ENCODE measurements at regions of chr15 and their contacts with region 1.

Region 1: GRCh38 chr15:64046347-64047153 is at the start of gene DAPK2:
- H3K4me3 ChIP-seq: peak within 1 kb of the TSS; percentile 36
- H3K27ac ChIP-seq: no peak within 1 kb of the TSS; the same call in 1 of the 2 replicates
- H3K4me1 ChIP-seq: 0 out of 2 replicates have a peak, but pooled peaks cover 3% of the 10 kb centered on the region
- CTCF ChIP-seq: peak; percentile 31; the same call in 1 of the 2 replicates

Region 2: DNA sequence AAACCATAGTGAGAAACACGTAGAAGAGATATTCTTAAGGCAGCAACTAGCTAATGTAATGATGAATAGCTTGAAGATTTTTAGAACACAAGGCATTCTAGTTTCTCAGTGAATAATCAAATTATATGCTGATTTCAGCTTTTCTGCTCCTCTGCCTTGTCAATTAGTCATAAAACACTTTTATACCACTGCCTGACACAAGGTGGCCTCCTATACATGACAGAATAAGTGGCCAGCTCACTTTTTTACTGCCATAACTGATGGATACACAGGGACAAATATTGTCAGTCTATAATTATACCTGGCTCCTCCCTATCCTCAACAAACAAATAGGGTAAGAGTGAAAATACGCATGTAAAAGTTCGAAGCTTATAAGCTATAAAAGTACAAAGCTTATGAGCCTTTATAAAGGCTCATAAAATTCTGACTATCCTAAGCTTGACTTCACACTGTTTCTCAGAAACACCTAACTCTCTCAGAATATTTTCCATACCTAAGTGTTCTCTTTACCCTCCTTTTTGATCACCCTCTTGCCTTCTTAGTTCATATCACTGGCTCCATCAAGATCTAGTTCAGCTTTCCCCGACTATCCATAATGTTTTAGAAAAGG is 294.4 kb before region 1 on chr15:
- CTCF ChIA-PET with region 1: interaction called, 15 read pairs
- POLR2A ChIA-PET with region 1: no interaction called
- H3K4me3 ChIP-seq: no peak overlapping the region
- H3K27ac ChIP-seq: no peak overlapping the region
- H3K4me1 ChIP-seq: 0 out of 2 replicates have a peak, but pooled peaks cover 2% of the 10 kb centered on the region
- CTCF ChIP-seq: no peak

Measured in HEK293 (cell line).